ENCODE measurements at regions of chr16 and their contacts with region 1.

Region 1: GRCh38 chr16:16127469-16128116 is 95.7 kb downstream of the ABCC6 start:
- DNase-seq: peak; percentile 46 to 83
- H3K4me3 ChIP-seq: no peak overlapping the region
- H3K4me1 ChIP-seq: no peaks in the 10 kb centered on the region
- H3K27me3 ChIP-seq: no peaks in the 10 kb centered on the region

Region 2: DNA sequence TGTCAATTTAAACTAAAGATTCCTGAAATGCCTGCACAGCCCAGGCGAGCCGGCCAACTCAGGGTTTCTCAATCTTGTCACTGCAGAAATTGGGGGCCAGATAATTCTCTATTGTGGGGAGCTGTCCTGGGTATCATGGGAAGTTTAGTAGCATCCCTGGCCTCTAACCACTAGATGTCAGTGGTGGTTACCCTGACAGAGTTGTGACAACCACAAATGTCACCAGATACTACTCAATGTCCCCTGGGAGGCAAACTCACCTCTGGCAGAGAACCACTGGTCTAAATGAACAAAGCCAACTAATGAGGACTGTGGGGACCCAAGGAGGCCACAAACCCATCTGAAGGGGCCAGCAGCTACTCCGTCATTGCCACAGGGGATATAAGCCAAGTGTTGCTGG is 361.7 kb before region 1 on chr16:
- in situ Hi-C with region 1: loop called (anchors 10 kb)
- DNase-seq: peak; percentile 66
- H3K4me3 ChIP-seq: no peak overlapping the region
- H3K4me1 ChIP-seq: peaks cover 8% of the 10 kb centered on the region
- H3K27me3 ChIP-seq: no peaks in the 10 kb centered on the region

Region 3: DNA sequence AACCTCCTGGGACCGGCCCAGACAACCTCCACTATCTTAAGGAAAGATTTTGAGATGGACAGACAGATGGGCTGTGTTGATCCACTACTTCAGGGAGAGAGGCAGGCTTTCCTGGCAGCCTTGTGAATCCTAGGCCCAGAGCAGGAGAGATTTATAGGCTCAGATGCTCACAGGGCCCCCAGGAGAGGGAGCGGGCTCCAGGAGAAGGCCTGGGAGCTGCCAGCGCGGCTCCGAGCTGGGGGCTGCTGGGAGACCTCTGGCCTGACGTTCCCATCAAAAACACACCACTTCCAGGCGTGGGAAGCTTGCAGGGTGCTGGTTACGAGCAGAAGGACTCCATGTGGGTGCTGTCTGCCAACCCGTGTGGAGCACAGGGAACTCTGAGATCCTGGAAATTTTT is 324.0 kb before region 1 on chr16:
- in situ Hi-C with region 1: no loop called
- DNase-seq: no peak
- H3K4me3 ChIP-seq: no peak overlapping the region
- H3K4me1 ChIP-seq: no peaks in the 10 kb centered on the region
- H3K27me3 ChIP-seq: no peaks in the 10 kb centered on the region

Region 4: GRCh38 chr16:15874745-15875314 is 252.8 kb before region 1 on chr16:
- in situ Hi-C with region 1: loop called (anchors 10 kb)
- DNase-seq: peak; percentile 33 to 67
- H3K4me3 ChIP-seq: no peak overlapping the region
- H3K4me1 ChIP-seq: peaks cover 5% of the 10 kb centered on the region
- H3K27me3 ChIP-seq: no peaks in the 10 kb centered on the region